ENCODE measurements at regions of chr6 and their contacts with region 1.

Region 1: DNA sequence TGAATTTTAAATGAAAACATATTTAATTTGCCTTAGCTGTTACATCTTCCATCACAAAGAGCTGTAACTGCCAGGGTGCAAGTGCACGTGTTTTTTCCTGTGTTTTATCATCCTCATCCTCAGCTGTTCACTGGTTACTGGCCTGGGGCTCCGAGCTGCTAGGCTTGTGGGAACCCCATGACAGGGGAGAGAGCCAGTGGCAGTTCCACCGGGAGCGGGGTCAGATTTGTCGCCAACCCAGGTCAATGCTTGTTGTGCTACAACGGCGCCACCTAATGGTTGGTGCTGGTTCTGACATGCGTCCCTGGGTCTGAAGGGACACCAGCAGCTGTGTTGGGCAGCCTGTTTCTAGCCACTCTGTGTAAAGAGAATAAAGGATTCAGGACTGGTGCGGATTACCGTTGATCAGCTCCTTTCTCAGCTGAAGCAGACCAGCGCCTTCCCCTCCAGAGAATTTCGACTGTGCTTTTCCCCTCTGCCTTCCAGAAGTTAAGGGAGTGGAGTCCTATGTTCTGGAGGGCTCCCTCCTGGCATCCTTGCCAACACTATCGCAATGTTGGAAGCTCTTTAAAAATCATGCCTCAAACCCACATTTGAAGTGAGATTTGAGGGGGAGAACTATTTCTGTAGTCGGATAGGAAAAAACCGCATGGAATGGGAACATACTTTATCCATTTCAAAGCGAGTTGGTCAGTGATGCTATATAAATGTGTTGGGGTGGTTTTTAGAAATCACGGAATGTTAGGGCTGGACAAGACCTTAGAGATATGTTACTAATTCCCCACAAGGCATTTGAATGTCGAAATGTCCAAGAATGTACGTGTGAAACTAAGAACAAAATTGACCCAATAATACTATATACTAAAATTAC is 32.1 kb downstream of the SUMO4 start:
- DNase-seq: peak; percentile 95

Region 2: GRCh38 chr6:149016716-149017115 is 415.4 kb before region 1 on chr6:
- CTCF ChIA-PET with region 1: no interaction called
- POLR2A ChIA-PET with region 1: no interaction called
- DNase-seq: no peak

Region 3: DNA sequence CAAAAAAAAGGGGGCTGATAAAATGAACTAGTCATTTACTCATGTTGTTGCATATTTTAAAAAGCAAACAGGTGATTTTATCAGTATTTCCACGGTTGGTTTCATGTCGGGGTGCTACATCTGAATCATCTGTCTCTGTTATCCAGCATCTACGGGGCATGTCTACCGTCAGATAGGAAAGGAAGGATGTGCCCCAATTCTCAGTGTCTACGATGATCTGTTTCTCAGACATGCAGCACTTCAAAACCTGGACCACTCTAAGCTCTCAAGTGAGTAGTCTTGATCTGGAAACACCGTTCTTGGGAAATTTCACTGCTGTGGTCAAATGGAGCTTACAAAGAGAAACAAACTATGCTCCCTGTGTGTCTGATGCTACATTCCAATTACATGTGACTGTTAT is 354.9 kb before region 1 on chr6:
- CTCF ChIA-PET with region 1: interaction called, 13 read pairs
- POLR2A ChIA-PET with region 1: no interaction called
- DNase-seq: no peak

Region 4: GRCh38 chr6:149084808-149085556 is 347.2 kb before region 1 on chr6:
- CTCF ChIA-PET with region 1: interaction called, 10 read pairs
- POLR2A ChIA-PET with region 1: no interaction called
- DNase-seq: no peak

Region 5: DNA sequence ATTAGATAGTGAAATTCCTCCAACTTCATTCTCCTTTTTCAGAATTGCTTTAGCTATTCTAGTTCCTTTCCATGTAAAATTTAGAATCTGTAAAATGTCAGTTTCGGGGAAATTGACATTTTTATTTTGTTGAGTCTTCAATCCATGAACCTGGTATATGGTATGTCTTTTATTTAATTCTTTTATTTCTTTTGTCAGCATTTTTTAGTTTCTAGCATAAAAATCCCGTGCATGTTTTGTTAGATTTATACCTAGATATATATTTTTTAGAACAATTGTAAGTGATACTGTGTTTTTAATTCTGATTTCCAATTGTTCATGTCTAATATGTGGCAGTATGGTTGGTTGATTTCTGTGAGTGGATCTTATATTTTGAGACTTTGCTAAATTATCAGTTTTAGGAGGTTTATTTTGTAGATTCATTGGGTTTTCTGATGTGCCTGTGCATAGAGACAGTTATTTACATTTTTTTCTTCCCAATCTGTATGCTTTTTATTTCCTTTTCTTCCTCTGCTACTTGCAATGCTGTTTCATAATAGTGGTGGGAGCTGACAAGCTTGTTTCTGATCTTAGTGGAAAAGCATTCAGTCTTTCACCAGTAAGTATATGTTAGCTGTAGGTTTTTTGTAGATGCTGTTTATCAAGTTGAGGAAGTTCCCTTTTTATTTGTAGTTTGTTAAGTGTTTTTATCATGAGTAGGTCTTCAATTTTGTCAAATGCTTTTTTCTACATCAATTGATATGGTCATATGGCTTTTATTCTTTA is 100.9 kb before region 1 on chr6:
- CTCF ChIA-PET with region 1: no interaction called
- POLR2A ChIA-PET with region 1: no interaction called
- DNase-seq: no peak

Region 6: DNA sequence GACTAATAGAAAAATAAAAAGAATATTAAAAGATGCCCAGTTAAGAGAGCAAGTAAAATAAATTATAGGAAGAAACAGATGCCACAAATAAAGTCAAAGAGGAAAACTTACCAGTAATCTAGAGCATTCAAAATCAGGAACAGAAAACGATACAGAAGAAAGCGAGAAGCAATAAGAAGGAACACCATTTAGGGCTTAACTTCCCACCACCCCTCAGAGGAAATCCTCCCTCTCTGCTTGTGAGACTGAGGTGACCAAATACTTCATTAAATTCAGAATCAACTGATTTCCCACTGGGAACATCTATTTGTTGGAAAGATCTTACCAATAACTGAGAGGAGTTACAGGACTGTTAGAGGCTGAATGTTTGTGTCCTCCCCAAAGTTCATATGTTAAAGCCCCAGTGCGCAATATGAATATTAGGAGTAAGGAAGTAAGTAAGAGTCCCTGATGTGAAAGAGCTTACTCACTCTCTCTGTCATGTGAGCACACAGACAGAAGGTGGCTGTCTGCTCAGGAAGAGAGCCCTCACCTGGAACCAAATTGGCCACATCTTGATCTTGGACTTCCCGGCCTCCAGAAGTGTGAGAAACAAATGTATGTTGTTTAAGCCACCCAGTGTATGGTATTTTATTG is 196.9 kb after region 1 on chr6:
- CTCF ChIA-PET with region 1: interaction called, 10 read pairs
- POLR2A ChIA-PET with region 1: no interaction called
- DNase-seq: no peak

Measured in HEK293T (cell line).